ENCODE measurements at regions of chr6 and their contacts with region 1.

Region 1: GRCh38 chr6:142155895-142156757 is 9.1 kb downstream of the VTA1 start:
- DNase-seq: no peak
- H3K4me3 Mint-ChIP-seq: no peak overlapping the region
- H3K27ac Mint-ChIP-seq: no peak overlapping the region
- H3K4me1 Mint-ChIP-seq: peaks cover 15% of the 10 kb centered on the region
- H3K27me3 Mint-ChIP-seq: no peaks in the 10 kb centered on the region

Region 2: GRCh38 chr6:142207265-142207877 is 51.2 kb after region 1 on chr6:
- intact Hi-C with region 1: loop called (anchors 1 kb)
- DNase-seq: no peak
- H3K4me3 Mint-ChIP-seq: no peak overlapping the region
- H3K27ac Mint-ChIP-seq: no peak overlapping the region
- H3K4me1 Mint-ChIP-seq: no peaks in the 10 kb centered on the region
- H3K27me3 Mint-ChIP-seq: no peaks in the 10 kb centered on the region

Measured in activated T-helper 2 cell treated with anti-CD3 and anti-CD28 coated beads, Interferon-gamma antibody, Interleukin-2, Interleukin-4, amounts not matched to agents 10 μg/mL and 5 μg/mL and 100 μg/mL, durations not matched to agents 14 hours and 24 hours and 36 hours (primary cell).